ENCODE measurements at regions of chr11 and their contacts with region 1.

Region 1: GRCh38 chr11:119121008-119121810 is at the start of gene HINFP:
- DNase-seq: peak; percentile 99 to 100 (median 100)
- ATAC-seq: peak; percentile 96
- H3K4me3 ChIP-seq: peak within 1 kb of the TSS; percentile 92
- H3K4me3 Mint-ChIP-seq: peak within 1 kb of the TSS; percentile 91
- H3K27ac ChIP-seq: peak within 1 kb of the TSS; percentile 75 to 76
- H3K27ac Mint-ChIP-seq: peak within 1 kb of the TSS; percentile 85
- H3K4me1 ChIP-seq: peaks cover 29% of the 10 kb centered on the region
- H3K4me1 Mint-ChIP-seq: peaks cover 47% of the 10 kb centered on the region
- H3K27me3 ChIP-seq: no peaks in the 10 kb centered on the region
- H3K27me3 Mint-ChIP-seq: no peaks in the 10 kb centered on the region
- CTCF ChIP-seq: no peak
- total RNA-seq, gene HINFP: 17.6 to 20.5 TPM

Region 2: GRCh38 chr11:119057000-119057769 is 64.0 kb before region 1 on chr11 and contains the start of gene HYOU1:
- CTCF ChIA-PET with region 1: interaction called, 3 read pairs
- POLR2A ChIA-PET with region 1: interaction called, 15 read pairs
- intact Hi-C with region 1: no loop called
- DNase-seq: peak; percentile 97 to 99 (median 98)
- ATAC-seq: peak; percentile 92
- H3K4me3 ChIP-seq: peak within 1 kb of the TSS; percentile 82
- H3K4me3 Mint-ChIP-seq: peak within 1 kb of the TSS; percentile 99
- H3K27ac ChIP-seq: peak within 1 kb of the TSS; percentile 83 to 84
- H3K27ac Mint-ChIP-seq: peak within 1 kb of the TSS; percentile 80
- H3K4me1 ChIP-seq: peaks cover 32% of the 10 kb centered on the region
- H3K4me1 Mint-ChIP-seq: peaks cover 36% of the 10 kb centered on the region
- H3K27me3 ChIP-seq: no peaks in the 10 kb centered on the region
- H3K27me3 Mint-ChIP-seq: no peaks in the 10 kb centered on the region
- CTCF ChIP-seq: peak; percentile 2
- total RNA-seq, gene HYOU1: 76.5 to 81.4 TPM

Region 3: DNA sequence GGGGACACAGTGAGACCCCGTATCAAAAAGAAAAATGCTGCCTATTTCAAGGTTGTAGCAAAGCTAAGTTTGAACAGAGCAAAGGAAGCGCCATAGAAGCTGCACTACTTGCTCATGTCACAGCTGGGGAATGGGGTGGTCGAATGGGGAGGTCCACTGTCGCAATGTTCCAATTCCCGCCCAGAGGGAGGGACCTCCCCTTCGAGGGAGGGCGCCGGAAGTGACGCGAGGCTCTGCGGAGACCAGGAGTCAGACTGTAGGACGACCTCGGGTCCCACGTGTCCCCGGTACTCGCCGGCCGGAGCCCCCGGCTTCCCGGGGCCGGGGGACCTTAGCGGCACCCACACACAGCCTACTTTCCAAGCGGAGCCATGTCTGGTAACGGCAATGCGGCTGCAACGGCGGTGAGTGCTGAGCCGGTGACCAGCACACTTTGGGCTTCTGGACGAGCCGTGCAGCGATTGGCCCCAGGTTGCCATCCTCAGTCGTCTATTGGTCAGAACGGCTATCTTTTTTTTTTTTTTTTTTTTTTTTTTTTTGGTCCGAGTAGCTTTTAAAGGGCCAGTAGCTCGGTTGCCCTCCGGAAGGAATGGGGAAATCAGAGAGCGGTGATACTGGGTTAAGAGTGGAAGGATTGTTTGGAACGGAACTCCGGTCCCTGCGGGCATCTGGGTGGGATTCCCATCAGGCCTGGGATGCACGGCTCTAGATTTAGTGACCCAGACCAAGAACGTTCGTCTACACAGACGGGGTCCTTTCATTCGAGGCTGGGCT is 36.4 kb before region 1 on chr11 and contains the start of gene HMBS:
- CTCF ChIA-PET with region 1: no interaction called
- POLR2A ChIA-PET with region 1: interaction called, 15 read pairs
- intact Hi-C with region 1: loop called in 1 of 2 experiments (anchors 5 kb)
- DNase-seq: peak; percentile 70 to 96 (median 88)
- ATAC-seq: peak; percentile 94
- H3K4me3 ChIP-seq: peak within 1 kb of the TSS; percentile 79
- H3K4me3 Mint-ChIP-seq: peak within 1 kb of the TSS; percentile 92
- H3K27ac ChIP-seq: peak within 1 kb of the TSS; percentile 74 to 81
- H3K27ac Mint-ChIP-seq: peak within 1 kb of the TSS; percentile 88
- H3K4me1 ChIP-seq: peaks cover 26% of the 10 kb centered on the region
- H3K4me1 Mint-ChIP-seq: peaks cover 25% of the 10 kb centered on the region
- H3K27me3 ChIP-seq: no peaks in the 10 kb centered on the region
- H3K27me3 Mint-ChIP-seq: no peaks in the 10 kb centered on the region
- CTCF ChIP-seq: no peak
- total RNA-seq, gene HMBS: 3.4 to 4.1 TPM

Region 4: GRCh38 chr11:119108146-119108856 is 12.9 kb before region 1 on chr11:
- CTCF ChIA-PET with region 1: interaction called, 4 read pairs
- POLR2A ChIA-PET with region 1: interaction called, 59 read pairs
- intact Hi-C with region 1: loop called in 1 of 2 experiments (anchors 2 kb)
- DNase-seq: peak in 8 of 14 experiments; percentile 16 to 64 (median 44)
- ATAC-seq: peak; percentile 51
- H3K4me3 ChIP-seq: peak overlapping the region; percentile 92
- H3K4me3 Mint-ChIP-seq: peak overlapping the region; percentile 81
- H3K27ac ChIP-seq: peak overlapping the region; percentile 43 to 72
- H3K27ac Mint-ChIP-seq: peak overlapping the region; percentile 82
- H3K4me1 ChIP-seq: peaks cover 39% of the 10 kb centered on the region
- H3K4me1 Mint-ChIP-seq: peaks cover 50% of the 10 kb centered on the region
- H3K27me3 ChIP-seq: no peaks in the 10 kb centered on the region
- H3K27me3 Mint-ChIP-seq: no peaks in the 10 kb centered on the region
- CTCF ChIP-seq: no peak

Region 5: GRCh38 chr11:119168471-119169281 is 47.5 kb after region 1 on chr11 and contains the start of gene NLRX1:
- CTCF ChIA-PET with region 1: interaction called, 4 read pairs
- POLR2A ChIA-PET with region 1: interaction called, 5 read pairs
- intact Hi-C with region 1: loop called in 1 of 2 experiments (anchors 5 kb)
- DNase-seq: peak; percentile 72 to 91 (median 78)
- ATAC-seq: peak; percentile 98
- H3K4me3 ChIP-seq: peak within 1 kb of the TSS; percentile 73
- H3K4me3 Mint-ChIP-seq: peak within 1 kb of the TSS; percentile 91
- H3K27ac ChIP-seq: peak within 1 kb of the TSS; percentile 36 to 56
- H3K27ac Mint-ChIP-seq: peak within 1 kb of the TSS; percentile 82
- H3K4me1 ChIP-seq: peaks cover 15% of the 10 kb centered on the region
- H3K4me1 Mint-ChIP-seq: peaks cover 6% of the 10 kb centered on the region
- H3K27me3 ChIP-seq: no peaks in the 10 kb centered on the region
- H3K27me3 Mint-ChIP-seq: no peaks in the 10 kb centered on the region
- CTCF ChIP-seq: peak; percentile 92
- total RNA-seq, gene NLRX1: 4.2 to 5.4 TPM

Region 6: DNA sequence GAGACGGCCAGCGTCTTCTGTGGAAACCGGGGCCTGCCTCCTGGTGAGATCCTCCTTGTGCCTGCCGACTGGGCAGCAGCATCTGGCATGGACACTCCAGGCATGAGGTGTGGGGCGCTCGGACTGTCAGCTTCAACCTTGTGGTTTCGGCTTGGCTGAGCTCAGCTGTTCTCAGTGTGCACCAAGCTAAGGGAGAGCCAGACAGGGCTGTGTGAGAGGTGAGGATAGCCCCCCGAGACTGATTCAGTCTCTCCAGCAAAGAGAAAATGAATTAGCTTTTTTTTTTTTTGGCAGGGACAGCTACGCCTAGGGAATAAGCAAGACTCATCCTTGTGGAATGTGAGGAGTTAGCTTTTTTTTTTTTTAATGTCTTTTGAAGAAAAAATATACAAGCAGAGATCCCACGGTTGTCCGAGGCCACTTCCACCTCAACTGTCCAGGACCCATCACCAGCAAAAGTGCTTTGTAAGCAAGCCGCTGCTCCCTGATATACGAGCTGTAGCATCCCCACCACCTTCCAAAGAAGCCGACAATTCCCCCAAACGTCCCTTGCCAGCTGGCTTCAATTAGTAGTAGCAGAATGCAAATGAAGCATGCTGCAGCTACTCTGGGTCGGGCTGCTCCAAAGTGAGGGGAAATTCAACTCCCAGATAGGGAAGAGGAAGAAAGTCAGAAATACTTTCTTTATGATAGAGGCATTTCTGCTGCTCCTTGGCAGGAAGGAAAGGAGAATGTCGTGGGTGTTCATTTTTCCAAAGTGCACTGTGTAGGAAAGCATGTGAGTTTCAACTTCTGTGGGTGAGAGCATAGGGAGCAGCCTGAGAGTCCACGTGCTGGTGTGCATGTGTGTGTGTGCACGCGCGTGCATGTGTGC is 311.5 kb after region 1 on chr11:
- CTCF ChIA-PET with region 1: no interaction called
- POLR2A ChIA-PET with region 1: no interaction called
- intact Hi-C with region 1: no loop called
- DNase-seq: no peak
- ATAC-seq: no peak
- H3K4me3 ChIP-seq: no peak overlapping the region
- H3K4me3 Mint-ChIP-seq: no peak overlapping the region
- H3K27ac ChIP-seq: no peak overlapping the region
- H3K27ac Mint-ChIP-seq: no peak overlapping the region
- H3K4me1 ChIP-seq: no peaks in the 10 kb centered on the region
- H3K4me1 Mint-ChIP-seq: no peaks in the 10 kb centered on the region
- H3K27me3 ChIP-seq: peaks cover 2 to 4% of the 10 kb centered on the region in 2 experiments
- H3K27me3 Mint-ChIP-seq: peaks cover 42% of the 10 kb centered on the region
- CTCF ChIP-seq: no peak

Measured in CD4-positive, alpha-beta T cell (primary cell).